AG04449 (cell line): ENCODE measurements at regions of chr7 and their contacts with region 1.

Region 1: DNA sequence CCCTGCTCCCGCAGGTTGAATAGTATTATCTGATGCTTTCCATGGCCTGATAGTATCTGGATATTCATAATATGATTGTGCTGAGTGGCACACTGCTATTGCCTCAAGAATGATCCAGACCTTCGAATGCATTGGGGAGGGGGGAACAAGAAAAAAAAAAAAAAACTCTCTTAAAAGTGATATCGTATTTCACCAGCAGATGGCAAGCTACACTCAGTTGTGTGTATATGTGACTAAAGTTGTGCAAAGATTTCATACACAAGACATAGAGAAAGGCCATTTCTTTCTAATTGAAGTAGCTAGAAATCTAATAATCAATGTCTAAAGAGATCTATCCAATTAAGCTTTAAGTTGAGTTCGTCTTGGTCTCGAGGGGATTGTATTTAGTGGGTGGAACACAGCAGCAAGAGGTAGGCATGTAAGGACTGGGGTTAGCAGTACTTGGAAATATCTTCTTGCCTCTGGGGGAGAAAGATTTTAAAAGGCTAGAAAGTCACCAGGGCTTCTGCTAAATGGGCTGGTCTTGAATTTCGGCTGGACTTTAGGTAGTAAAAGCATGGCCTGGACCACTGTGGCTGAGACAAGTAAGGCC is 15.3 kb downstream of the SFRP4 start:
- DNase-seq: no peak
- H3K4me3 ChIP-seq: no peak overlapping the region
- CTCF ChIP-seq: peak; percentile 42

Region 2: DNA sequence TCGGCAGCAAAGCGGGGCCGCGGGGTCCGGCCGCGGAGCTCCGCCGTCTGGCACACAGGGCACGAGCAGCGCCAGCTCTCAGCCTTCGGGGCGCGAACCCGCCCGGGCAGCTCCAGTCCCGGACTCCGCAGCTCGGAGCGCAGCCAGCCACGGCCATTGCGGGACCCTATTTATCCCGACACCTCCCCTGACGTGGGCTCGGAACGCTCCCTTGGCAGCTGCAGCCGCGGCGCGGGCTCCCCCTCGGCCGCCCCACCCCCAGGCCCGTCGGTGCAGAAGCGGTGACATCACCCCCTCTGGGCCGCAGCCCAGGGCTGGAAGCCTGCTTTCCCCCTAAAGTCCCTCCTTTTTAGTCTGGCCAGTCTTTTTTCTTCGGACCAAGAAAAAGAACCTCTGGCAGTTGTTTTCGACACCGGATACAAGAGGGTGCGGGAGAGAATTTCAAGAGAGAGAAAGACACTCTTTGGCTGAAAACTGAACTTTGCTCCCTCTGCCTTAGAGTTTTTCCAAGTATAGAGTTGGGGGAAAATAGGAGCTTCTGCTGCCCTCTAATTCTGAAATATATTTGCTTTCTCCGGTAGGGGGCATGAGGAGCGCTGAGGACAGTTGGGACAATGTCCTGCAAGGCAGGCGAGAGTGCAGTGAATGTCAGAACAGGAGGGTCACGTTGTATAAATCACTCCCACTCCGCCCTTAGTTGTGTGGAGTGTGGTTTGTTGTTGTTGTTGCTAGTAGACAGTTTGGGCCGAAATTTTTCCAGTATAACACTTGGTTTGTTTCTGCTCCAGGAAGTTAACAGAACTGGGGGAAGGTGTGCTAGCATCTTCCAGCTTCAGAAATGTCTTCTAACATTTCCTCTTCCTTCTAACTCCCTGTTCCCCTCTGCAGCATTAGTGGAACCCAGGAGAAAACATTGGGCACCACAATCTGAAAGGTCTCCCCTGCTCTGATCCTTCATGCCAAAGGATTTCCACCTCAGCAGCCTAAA is 15.6 kb after region 1 on chr7 and contains the start of gene SFRP4:
- CTCF ChIA-PET with region 1: interaction called, 46 read pairs
- POLR2A ChIA-PET with region 1: no interaction called
- DNase-seq: no peak
- H3K4me3 ChIP-seq: peak within 1 kb of the TSS; percentile 55
- CTCF ChIP-seq: peak; percentile 63

Region 3: GRCh38 chr7:38020121-38020785 is 118.9 kb after region 1 on chr7:
- CTCF ChIA-PET with region 1: no interaction called
- POLR2A ChIA-PET with region 1: no interaction called
- DNase-seq: no peak
- H3K4me3 ChIP-seq: no peak overlapping the region
- CTCF ChIP-seq: no peak

Region 4: DNA sequence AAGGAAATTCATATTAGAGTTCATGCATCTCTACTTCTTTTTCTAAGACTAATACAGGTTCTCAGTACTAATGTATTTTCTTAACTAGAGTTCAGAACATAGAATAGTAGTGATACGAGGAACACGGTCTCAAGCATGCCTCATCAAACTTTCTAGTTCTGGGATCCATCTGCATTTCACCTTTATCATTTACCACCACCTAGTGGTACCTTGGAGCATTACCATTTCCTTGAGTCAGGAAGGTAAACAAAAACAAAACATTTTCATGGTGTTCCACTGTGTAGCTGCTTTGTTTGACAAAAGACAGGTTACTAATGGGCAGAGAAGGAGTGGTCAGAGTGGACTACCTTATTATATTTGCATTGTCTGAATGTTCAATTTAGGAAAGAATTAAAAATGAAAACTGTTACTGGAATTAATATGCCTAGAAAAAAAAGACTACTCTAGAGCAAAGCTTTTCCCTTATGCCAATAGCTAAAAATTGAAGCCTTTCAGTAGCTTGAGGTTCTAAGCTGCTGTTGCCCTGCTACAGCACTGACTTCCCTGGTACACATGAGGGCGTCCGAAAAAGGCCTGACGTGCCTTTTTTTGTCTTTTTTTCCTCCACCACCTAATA is 321.3 kb after region 1 on chr7:
- CTCF ChIA-PET with region 1: interaction called, 16 read pairs
- POLR2A ChIA-PET with region 1: no interaction called
- DNase-seq: no peak
- H3K4me3 ChIP-seq: no peak overlapping the region
- CTCF ChIP-seq: peak; percentile 63

Region 5: GRCh38 chr7:38318803-38319416 is 417.6 kb after region 1 on chr7:
- CTCF ChIA-PET with region 1: interaction called, 11 read pairs
- POLR2A ChIA-PET with region 1: no interaction called
- DNase-seq: peak; percentile 53
- H3K4me3 ChIP-seq: no peak overlapping the region
- CTCF ChIP-seq: peak; percentile 74